ENCODE measurements at regions of chr17 and their contacts with region 1.

Region 1: GRCh38 chr17:63361182-63361581 is 84.9 kb downstream of the CYB561 start:
- DNase-seq: no peak
- H3K4me3 ChIP-seq: no peak overlapping the region
- H3K27ac ChIP-seq: no peak overlapping the region
- H3K4me1 ChIP-seq: peaks cover 9% of the 10 kb centered on the region
- H3K27me3 ChIP-seq: no peaks in the 10 kb centered on the region
- CTCF ChIP-seq: no peak

Region 2: DNA sequence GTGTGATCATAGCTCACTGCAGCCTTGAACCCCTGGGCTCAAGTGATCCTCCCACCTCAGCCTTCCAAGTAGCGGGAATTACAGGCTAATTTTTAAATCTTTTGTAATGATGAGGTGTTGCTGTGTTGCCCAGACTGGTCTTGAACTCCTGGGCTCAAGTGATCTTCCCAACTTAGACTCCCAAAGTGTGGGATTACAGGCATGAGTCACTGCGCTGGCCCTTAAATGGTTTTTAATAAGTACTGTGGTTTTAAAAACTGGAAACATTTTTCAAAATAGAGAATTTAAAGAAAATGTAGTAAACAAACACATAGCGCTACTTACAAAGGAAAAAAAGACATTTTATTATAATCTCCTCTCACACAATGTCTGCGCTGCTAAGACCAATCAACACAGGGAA is 585.3 kb before region 1 on chr17:
- CTCF ChIA-PET with region 1: no interaction called
- dilution Hi-C with region 1: no loop called
- in situ Hi-C with region 1: no loop called
- intact Hi-C with region 1: no loop called
- DNase-seq: no peak
- H3K4me3 ChIP-seq: no peak overlapping the region
- H3K27ac ChIP-seq: no peak overlapping the region
- H3K4me1 ChIP-seq: peaks cover 28% of the 10 kb centered on the region
- H3K27me3 ChIP-seq: no peaks in the 10 kb centered on the region
- CTCF ChIP-seq: no peak

Region 3: GRCh38 chr17:63260212-63260611 is 101.0 kb before region 1 on chr17:
- CTCF ChIA-PET with region 1: interaction called, 19 read pairs
- dilution Hi-C with region 1: no loop called
- in situ Hi-C with region 1: no loop called
- intact Hi-C with region 1: no loop called
- DNase-seq: no peak
- H3K4me3 ChIP-seq: no peak overlapping the region
- H3K27ac ChIP-seq: no peak overlapping the region
- H3K4me1 ChIP-seq: no peaks in the 10 kb centered on the region
- H3K27me3 ChIP-seq: no peaks in the 10 kb centered on the region
- CTCF ChIP-seq: no peak

Region 4: DNA sequence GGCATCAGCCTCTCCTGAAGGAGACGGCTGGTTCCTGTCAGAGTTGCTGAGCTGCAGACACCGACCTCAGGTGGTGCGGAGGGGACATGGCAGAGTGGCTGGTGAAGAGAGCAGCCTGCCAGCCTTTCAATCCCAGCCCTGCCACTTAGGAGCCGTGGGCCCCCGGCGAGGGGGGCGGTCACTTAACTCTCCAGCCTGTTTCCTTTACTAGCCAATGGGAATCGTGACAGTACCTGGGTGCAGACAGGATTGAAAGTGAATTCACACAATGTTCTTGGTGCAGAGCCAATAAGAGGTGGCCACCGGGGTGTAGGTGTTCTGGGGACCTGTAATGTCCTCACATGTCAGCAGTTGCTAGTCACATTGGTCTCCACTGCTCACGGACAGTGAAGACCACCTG is 129.1 kb after region 1 on chr17:
- CTCF ChIA-PET with region 1: no interaction called
- dilution Hi-C with region 1: no loop called
- in situ Hi-C with region 1: no loop called
- intact Hi-C with region 1: no loop called
- DNase-seq: no peak
- H3K4me3 ChIP-seq: no peak overlapping the region
- H3K27ac ChIP-seq: no peak overlapping the region
- H3K4me1 ChIP-seq: no peaks in the 10 kb centered on the region
- H3K27me3 ChIP-seq: no peaks in the 10 kb centered on the region
- CTCF ChIP-seq: no peak

Measured in mammary epithelial cell (primary cell).